ENCODE measurements at regions of chr6 and their contacts with region 1.

Region 1: DNA sequence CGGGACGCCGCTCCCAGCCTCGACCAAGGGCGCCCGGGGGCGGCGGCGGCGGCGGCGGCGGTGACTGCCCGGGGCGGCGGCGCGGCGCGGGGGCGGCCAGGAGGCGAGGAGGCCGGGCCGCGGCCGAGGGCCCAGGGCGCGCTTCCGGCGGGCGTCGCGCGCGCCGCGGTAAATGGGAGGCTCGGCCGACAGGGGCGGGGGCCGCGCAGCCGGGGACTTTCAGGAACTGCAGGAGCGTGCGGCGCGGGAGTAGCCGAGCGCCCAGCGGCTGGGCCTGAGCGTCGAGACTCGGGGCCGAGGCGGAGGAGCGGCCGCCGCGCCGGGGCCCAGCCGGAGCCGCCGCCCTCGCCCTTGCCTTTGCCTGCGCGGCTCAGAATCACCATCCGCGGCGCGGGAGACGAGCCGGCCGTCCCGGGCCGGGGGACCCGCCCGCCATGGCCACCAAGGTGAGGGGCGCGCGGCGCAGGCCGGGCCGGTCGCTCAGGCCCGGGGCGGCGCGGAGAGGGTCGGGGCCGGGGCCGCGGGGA is at the start of gene SNX9:
- DNase-seq: peak; percentile 96
- total RNA-seq, gene SNX9: 82.2 to 103 TPM

Region 2: GRCh38 chr6:157849288-157850017 is 26.4 kb after region 1 on chr6:
- intact Hi-C with region 1: loop called in 1 of 2 experiments (anchors 2 kb)
- DNase-seq: no peak

Region 3: DNA sequence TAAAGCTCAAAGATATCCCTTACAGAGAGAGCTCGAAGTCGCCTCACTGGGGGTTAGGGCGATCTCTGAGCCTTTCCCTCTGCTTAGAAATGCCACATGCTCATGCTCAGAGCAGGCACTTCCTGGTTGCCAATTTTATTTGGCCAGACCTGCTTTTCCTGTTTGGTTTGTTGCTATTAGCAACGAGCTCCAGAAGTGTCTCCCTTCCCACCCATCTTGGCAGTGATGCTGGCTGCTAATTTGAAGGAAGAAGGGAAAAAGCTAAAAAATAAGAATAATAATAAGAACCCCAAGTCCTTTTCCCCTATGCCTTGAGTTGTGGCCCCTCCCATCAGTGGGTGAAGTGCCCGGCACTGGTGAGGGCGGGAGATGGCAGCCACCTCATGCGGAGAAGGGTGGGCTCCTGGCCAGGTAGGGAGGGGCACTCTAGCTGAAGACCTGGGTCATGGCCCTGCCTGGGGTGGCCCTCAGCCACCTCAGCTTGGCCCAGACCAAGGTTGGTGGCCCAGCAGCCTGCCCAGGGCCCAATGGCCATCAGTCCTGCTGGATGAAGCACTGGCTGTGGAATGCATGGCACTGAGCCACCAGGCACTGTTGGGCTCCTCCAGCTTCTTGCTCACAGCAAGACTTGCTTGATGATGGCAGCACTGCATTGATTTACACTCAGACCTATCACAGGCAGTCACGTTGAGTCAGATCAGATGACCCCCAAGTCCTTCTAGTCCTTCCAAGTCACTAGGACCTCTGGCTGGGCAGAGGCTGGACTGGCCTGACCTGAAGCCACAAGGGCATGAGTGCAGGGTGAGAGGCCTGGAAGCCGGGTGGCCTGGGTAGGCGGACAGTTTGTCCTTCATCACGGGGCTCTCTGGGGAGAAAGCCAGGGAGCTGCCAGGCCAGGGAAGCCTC is 237.6 kb after region 1 on chr6:
- intact Hi-C with region 1: no loop called
- DNase-seq: peak; percentile 97

Measured in posterior vena cava (tissue), 2 donors.